Endothelial cell of umbilical vein (primary cell): ENCODE measurements at regions of chr4 and their contacts with region 1.

Region 1: GRCh38 chr4:119139822-119140252 is 4.2 kb downstream of the MYOZ2 start:
- DNase-seq: peak; percentile 68
- H3K4me3 ChIP-seq: peak overlapping the region in 1 of 3 experiments; percentile 32
- H3K27ac ChIP-seq: peak overlapping the region; percentile 45
- H3K4me1 ChIP-seq: peaks cover 25% of the 10 kb centered on the region
- H3K27me3 ChIP-seq: no peaks in the 10 kb centered on the region
- CTCF ChIP-seq: no peak
- POLR2A ChIP-seq: no peak

Region 2: GRCh38 chr4:119093042-119093827 is 46.6 kb before region 1 on chr4:
- CTCF ChIA-PET with region 1: no interaction called
- POLR2A ChIA-PET with region 1: no interaction called
- dilution Hi-C with region 1: no loop called
- intact Hi-C with region 1: no loop called
- DNase-seq: no peak
- H3K4me3 ChIP-seq: no peak overlapping the region
- H3K27ac ChIP-seq: peak overlapping the region; percentile 19
- H3K4me1 ChIP-seq: peaks cover 16% of the 10 kb centered on the region
- H3K27me3 ChIP-seq: no peaks in the 10 kb centered on the region
- CTCF ChIP-seq: no peak
- POLR2A ChIP-seq: no peak

Region 3: GRCh38 chr4:119162174-119162573 is 22.3 kb after region 1 on chr4:
- CTCF ChIA-PET with region 1: no interaction called
- POLR2A ChIA-PET with region 1: no interaction called
- dilution Hi-C with region 1: no loop called
- intact Hi-C with region 1: loop called (anchors 2 kb)
- DNase-seq: no peak
- H3K4me3 ChIP-seq: no peak overlapping the region
- H3K27ac ChIP-seq: no peak overlapping the region
- H3K4me1 ChIP-seq: no peaks in the 10 kb centered on the region
- H3K27me3 ChIP-seq: no peaks in the 10 kb centered on the region
- CTCF ChIP-seq: no peak
- POLR2A ChIP-seq: no peak